AG04449 (cell line): ENCODE measurements at regions of chr17 and their contacts with region 1.

Region 1: GRCh38 chr17:47205419-47205963 is 3.7 kb upstream of the MYL4 start:
- DNase-seq: peak; percentile 63
- H3K4me3 ChIP-seq: no peak overlapping the region; the same call in 1 of the 2 replicates
- CTCF ChIP-seq: no peak

Region 2: DNA sequence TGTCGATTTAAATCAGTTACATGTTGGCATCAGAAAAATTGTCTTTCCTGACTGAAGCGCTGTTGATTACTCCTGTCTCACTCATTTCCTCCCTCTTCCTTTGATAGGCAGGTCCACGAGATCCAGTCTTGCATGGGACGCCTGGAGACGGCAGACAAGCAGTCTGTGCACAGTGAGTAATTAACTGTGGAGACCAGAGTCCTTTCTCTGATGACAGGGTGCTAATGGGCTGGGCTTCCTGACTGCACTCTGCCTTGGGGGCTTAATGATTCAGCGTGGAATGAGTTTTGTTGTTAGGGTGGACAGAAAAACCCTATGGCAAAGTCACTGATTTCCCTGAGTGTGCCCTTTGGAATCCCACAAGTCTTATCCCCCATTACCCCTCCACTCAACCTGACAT is 276.1 kb before region 1 on chr17:
- CTCF ChIA-PET with region 1: no interaction called
- POLR2A ChIA-PET with region 1: no interaction called
- DNase-seq: no peak
- H3K4me3 ChIP-seq: no peak overlapping the region
- CTCF ChIP-seq: no peak

Region 3: GRCh38 chr17:47220531-47220999 is 15.1 kb after region 1 on chr17:
- CTCF ChIA-PET with region 1: interaction called, 10 read pairs
- POLR2A ChIA-PET with region 1: no interaction called
- DNase-seq: no peak
- H3K4me3 ChIP-seq: no peak overlapping the region
- CTCF ChIP-seq: no peak